GM23248 (cell line): ENCODE measurements at regions of chr14 and their contacts with region 1.

Region 1: GRCh38 chr14:61456720-61457119 is 135.3 kb downstream of the PRKCH start:
- DNase-seq: peak; percentile 84
- H3K4me3 ChIP-seq: no peak overlapping the region
- H3K27ac ChIP-seq: no peak overlapping the region
- H3K4me1 ChIP-seq: peaks cover 5% of the 10 kb centered on the region; the same call in 1 of the 2 replicates
- H3K27me3 ChIP-seq: no peaks in the 10 kb centered on the region

Region 2: GRCh38 chr14:61145034-61145902 is 311.5 kb before region 1 on chr14:
- in situ Hi-C with region 1: no loop called
- DNase-seq: peak; percentile 94
- H3K4me3 ChIP-seq: peak overlapping the region; percentile 11
- H3K27ac ChIP-seq: peak overlapping the region; percentile 91
- H3K4me1 ChIP-seq: peaks cover 28% of the 10 kb centered on the region
- H3K27me3 ChIP-seq: no peaks in the 10 kb centered on the region

Region 3: GRCh38 chr14:61260939-61261776 is 195.6 kb before region 1 on chr14:
- in situ Hi-C with region 1: no loop called
- DNase-seq: peak; percentile 93
- H3K4me3 ChIP-seq: no peak overlapping the region
- H3K27ac ChIP-seq: peak overlapping the region; percentile 71
- H3K4me1 ChIP-seq: peaks cover 40% of the 10 kb centered on the region
- H3K27me3 ChIP-seq: no peaks in the 10 kb centered on the region

Region 4: GRCh38 chr14:61368114-61368726 is 88.5 kb before region 1 on chr14:
- in situ Hi-C with region 1: no loop called
- DNase-seq: no peak
- H3K4me3 ChIP-seq: no peak overlapping the region
- H3K27ac ChIP-seq: no peak overlapping the region
- H3K4me1 ChIP-seq: no peaks in the 10 kb centered on the region
- H3K27me3 ChIP-seq: peaks cover 5% of the 10 kb centered on the region

Region 5: DNA sequence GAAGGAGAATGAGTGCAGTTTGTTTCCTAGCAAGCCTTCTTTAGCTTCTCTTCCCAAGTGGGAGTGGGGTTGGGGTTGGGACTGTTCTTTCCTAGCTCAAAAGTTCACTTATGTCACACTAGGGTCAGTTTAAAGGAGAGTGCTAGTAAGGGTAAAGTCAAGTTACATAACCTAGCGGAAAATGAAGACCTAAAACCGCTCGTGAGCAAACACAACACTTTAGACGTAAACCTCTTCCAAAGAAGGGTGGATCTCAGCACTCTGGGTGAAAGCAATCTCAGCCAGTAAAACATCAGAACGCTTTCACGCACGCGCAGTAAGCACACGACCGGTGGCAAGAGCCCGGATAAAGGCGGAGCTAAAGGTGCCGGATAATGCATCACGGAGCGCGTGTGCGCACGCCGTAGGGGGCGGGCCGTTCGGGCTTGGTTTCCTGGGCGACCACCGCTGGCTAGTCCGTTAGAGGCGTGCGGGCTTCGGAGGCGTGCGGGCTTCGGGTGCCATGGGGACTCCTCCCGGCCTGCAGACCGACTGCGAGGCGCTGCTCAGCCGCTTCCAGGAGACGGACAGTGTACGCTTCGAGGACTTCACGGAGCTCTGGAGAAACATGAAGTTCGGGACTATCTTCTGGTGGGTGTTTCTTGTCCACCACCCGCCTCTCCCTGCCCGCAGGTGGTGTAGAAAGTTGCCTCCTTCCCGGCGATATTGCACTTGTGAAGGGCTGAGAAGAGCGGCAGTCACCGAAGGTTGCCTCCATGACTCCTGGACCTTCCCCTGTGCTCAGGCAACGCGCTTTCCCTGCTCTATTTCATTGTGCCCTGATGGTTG is 305.5 kb after region 1 on chr14 and contains the start of gene SNAPC1:
- in situ Hi-C with region 1: loop called (anchors 25 kb)
- DNase-seq: peak; percentile 100
- H3K4me3 ChIP-seq: peak within 1 kb of the TSS; percentile 87
- H3K27ac ChIP-seq: peak within 1 kb of the TSS; percentile 81
- H3K4me1 ChIP-seq: peaks cover 36% of the 10 kb centered on the region
- H3K27me3 ChIP-seq: no peaks in the 10 kb centered on the region
- total RNA-seq, gene SNAPC1: 32.1 and 35.9 TPM in 2 replicates

Region 6: GRCh38 chr14:61837336-61838229 is 380.9 kb after region 1 on chr14:
- in situ Hi-C with region 1: loop called (anchors 5 kb)
- DNase-seq: peak; percentile 80
- H3K4me3 ChIP-seq: no peak overlapping the region
- H3K27ac ChIP-seq: no peak overlapping the region
- H3K4me1 ChIP-seq: peaks cover 15% of the 10 kb centered on the region
- H3K27me3 ChIP-seq: no peaks in the 10 kb centered on the region